Transverse colon (tissue), 4 donors: ENCODE measurements at regions of chr7 and their contacts with region 1.

Region 1: GRCh38 chr7:73851410-73852234 is 9.3 kb upstream of the METTL27 start:
- DNase-seq: no peak
- H3K4me3 ChIP-seq: no peak overlapping the region
- H3K27ac ChIP-seq: peak overlapping the region; percentile 64 to 82 (median 76)
- H3K4me1 ChIP-seq: peaks cover 18 to 51% (median 32%) of the 10 kb centered on the region in 4 donors
- H3K27me3 ChIP-seq: no peaks in the 10 kb centered on the region
- CTCF ChIP-seq: no peak
- EP300 ChIP-seq: no peak
- POLR2A ChIP-seq: no peak

Region 2: DNA sequence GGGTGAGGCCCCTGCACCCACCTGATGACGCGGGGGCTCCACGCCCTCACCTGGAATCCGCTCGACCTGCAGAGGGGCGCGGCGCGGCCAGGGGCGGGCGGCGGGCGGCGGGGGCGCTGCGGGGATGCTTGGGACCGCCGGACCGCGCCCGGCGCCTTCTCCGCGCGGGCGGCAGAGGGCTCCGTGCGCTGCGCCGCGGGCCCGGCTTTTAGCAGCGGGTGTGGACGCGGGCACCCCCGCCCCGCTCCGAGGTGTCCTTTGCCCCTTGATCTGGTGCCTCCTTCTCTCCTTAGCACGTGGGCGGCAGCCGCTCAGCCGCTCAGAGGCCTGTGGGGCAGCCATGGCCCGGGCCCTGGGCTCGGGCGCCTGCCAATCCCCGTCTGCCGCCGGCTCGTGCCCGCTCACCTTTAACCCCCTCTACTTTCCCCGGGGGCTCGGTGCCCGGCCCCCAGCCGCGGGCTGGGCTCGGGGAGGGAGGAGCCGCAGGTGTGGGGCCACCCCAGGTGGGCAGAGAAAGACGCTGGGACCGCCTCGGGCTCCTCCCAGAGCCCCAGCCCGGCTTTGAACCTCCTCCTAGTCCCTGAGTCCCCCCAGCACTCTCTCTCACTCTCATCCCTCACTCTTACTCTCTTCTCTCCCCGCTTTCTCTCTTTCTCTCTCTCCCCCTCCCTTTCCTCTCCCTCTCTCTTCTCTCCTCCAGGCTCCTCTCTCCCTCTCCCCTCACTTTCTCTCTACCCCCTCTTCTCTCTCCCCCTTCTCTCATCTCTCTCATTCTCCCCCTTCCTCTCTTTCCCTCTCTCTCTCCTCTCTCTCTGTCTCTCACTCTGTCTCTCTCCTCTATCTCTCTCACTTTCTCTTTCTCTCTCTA is 203.7 kb before region 1 on chr7:
- in situ Hi-C with region 1: loop called in 2 of 4 experiments (anchors 25 kb)
- intact Hi-C with region 1: no loop called
- DNase-seq: peak; percentile 83
- H3K4me3 ChIP-seq: peak overlapping the region; percentile 6 to 59 (median 27)
- H3K27ac ChIP-seq: peak overlapping the region in 2 of 4 donors; percentile 45 to 46
- H3K4me1 ChIP-seq: peaks cover 4 to 15% (median 10%) of the 10 kb centered on the region in 4 donors
- H3K27me3 ChIP-seq: peaks cover 40% of the 10 kb centered on the region
- CTCF ChIP-seq: peak in 2 of 5 experiments; percentile 19 to 20
- EP300 ChIP-seq: no peak
- POLR2A ChIP-seq: peak; percentile 18

Region 3: DNA sequence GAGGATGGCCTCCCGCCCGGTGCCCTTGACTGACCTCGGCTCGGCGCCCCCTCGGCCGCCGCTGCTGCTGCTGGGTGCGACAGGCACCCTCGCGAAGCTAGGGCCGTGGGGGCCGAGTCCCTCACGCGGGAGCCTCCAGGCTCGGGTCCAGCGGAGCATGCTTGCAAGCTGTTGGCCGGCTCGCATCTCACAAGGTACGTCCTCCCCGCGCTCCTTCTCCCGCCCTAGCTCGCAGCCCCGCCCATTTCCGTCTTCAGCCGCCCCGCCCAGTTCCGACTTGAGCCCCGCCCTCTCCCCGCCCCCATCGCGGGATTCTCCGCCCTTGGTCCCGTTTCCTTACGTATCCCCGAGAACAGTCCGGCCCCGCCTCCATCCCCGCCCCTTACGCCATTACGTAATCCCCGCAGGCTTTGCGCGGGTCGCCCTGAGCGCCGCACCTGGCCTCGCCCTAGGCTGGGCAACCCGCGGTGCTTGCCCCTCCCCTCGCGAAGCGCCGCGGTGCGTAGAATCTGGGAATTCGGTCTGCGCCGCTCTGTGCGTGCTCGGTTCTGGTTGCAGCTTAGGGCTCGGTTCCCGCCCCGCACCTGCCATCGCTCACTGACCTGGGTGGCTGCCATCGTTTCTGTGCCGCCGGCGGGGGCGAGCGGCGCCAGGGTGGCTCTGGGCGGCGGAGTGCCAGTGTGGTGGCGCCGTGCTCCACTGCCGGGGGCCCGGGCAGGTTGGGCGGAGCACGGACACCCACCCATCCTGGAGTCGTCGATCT is 112.8 kb before region 1 on chr7 and contains the start of gene ABHD11:
- in situ Hi-C with region 1: loop called in 1 of 4 experiments (anchors 10 kb)
- intact Hi-C with region 1: no loop called
- DNase-seq: peak; percentile 100
- H3K4me3 ChIP-seq: peak within 1 kb of the TSS; percentile 65 to 95 (median 86)
- H3K27ac ChIP-seq: peak within 1 kb of the TSS; percentile 92 to 98 (median 96)
- H3K4me1 ChIP-seq: peaks cover 14 to 67% (median 52%) of the 10 kb centered on the region in 4 donors
- H3K27me3 ChIP-seq: no peaks in the 10 kb centered on the region
- CTCF ChIP-seq: no peak
- EP300 ChIP-seq: peak; percentile 22
- POLR2A ChIP-seq: peak; percentile 95
- total RNA-seq, gene ABHD11: 108 to 177 (median 117) TPM

Region 4: DNA sequence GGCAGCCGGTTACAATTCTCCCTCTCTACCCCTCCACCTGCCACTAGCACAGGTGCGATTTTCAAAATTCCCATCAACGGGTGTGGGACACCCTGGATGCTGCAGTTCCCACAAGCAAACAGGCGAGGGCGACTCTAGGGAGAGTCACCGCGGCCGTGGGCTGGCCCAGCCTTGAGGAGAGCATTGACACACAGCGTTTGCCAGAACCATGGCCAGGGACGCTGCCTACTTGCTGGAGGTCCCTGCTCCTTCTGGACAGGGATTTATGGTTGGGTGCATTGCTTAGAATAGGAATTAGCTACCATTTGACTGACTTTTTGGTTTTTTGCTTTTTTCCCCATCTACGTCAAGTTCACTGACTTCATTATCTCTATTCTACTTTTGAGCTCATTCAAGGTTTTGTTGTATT is 39.9 kb before region 1 on chr7:
- in situ Hi-C with region 1: loop called in 1 of 4 experiments (anchors 5 kb)
- intact Hi-C with region 1: loop called (anchors 2 kb)
- DNase-seq: peak; percentile 88
- H3K4me3 ChIP-seq: no peak overlapping the region
- H3K27ac ChIP-seq: peak overlapping the region; percentile 79 to 89 (median 87)
- H3K4me1 ChIP-seq: peaks cover 5 to 27% (median 17%) of the 10 kb centered on the region in 4 donors
- H3K27me3 ChIP-seq: peaks cover 3% of the 10 kb centered on the region
- CTCF ChIP-seq: peak; percentile 78 to 93 (median 89)
- EP300 ChIP-seq: no peak
- POLR2A ChIP-seq: no peak